ENCODE measurements at regions of chr14 and their contacts with region 1.

Region 1: GRCh38 chr14:32509632-32510187 is 180.6 kb downstream of the AKAP6 start:
- DNase-seq: peak; percentile 76 to 90
- ATAC-seq: peak; percentile 77 to 80
- H3K4me3 ChIP-seq: peak overlapping the region; percentile 7 to 39 (median 22)
- H3K27ac ChIP-seq: peak overlapping the region; percentile 78 to 94 (median 90)
- H3K4me1 ChIP-seq: peaks cover 72 to 78% of the 10 kb centered on the region in 2 donors
- H3K27me3 ChIP-seq: no peaks in the 10 kb centered on the region
- CTCF ChIP-seq: no peak
- POLR2A ChIP-seq: peak in 1 of 2 donors; percentile 61

Region 2: GRCh38 chr14:31090883-31091764 is 1418.6 kb before region 1 on chr14:
- in situ Hi-C with region 1: no loop called
- intact Hi-C with region 1: loop called (anchors 10 kb)
- DNase-seq: peak; percentile 79 to 80
- ATAC-seq: peak; percentile 94 to 97
- H3K4me3 ChIP-seq: peak overlapping the region in 1 of 4 donors; percentile 20
- H3K27ac ChIP-seq: peak overlapping the region; percentile 84 to 95 (median 92)
- H3K4me1 ChIP-seq: peaks cover 22 to 30% of the 10 kb centered on the region in 2 donors
- H3K27me3 ChIP-seq: no peaks in the 10 kb centered on the region
- CTCF ChIP-seq: no peak
- POLR2A ChIP-seq: peak; percentile 17 to 52

Region 3: DNA sequence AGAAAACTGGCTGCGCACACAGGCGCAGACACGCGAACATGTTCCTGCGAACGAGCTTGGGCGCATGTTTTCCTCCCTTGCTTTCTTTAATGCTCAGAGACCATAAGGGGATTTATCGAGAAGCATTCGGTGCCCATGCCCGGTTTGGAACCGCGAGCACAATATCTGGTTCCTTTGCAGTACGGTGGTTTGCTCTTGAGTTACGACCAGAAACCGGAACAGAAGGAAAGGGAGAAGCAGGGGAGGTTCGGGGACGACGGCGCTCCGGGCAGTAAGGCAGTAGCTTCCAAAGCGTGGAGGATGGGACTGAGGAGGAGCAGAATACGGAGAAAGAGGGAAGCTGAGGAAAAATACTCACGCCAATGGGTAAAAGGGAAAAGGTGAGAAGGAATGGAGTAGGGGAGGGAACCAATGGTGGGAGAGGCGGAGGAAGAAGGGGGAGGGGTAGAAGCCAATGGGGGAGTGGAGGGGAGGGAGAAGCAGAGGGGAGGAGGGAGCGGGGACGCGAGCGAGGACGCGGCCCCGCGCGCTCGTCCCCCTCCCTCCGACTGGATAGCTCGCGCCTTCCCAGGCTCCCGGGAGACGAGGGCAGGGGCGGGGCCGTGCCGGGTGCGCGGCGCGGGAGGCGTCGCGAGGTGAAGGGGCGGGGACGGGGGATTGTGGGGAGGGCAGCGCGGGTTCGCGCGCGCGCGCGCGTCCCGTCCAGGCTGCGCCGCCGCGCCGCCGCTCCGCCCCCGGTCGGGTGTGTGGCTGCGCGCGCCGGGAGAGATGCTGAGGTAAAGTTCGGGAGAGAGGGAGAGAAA is 433.2 kb before region 1 on chr14:
- in situ Hi-C with region 1: no loop called
- intact Hi-C with region 1: loop called (anchors 2 kb)
- DNase-seq: peak; percentile 93 to 96
- ATAC-seq: peak; percentile 87 to 89
- H3K4me3 ChIP-seq: peak overlapping the region; percentile 89 to 99 (median 96)
- H3K27ac ChIP-seq: peak overlapping the region; percentile 98 to 100 (median 100)
- H3K4me1 ChIP-seq: peaks cover 27 to 42% of the 10 kb centered on the region in 2 donors
- H3K27me3 ChIP-seq: no peaks in the 10 kb centered on the region
- CTCF ChIP-seq: no peak
- POLR2A ChIP-seq: peak; percentile 64 to 65

Region 4: DNA sequence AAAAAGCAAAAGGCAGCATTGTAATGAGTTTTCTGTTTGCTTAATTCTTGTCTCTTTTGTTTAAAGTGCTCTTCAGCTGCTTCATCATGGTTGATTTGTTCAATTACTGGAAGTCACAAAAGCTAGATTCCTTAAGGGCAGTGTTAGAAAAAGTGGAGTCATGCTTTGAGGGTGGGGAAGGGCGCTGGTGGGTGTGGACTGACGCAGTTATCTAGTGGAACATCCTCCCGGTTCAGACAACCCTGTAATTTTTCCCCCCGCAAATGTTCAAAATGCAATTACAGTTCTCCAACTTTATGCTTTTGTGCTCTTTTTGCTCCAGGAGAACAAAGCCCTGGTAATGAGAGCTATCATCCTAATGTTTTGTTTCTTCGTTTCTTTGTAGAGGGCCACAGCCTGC is 178.5 kb before region 1 on chr14:
- in situ Hi-C with region 1: loop called in 1 of 4 experiments (anchors 10 kb)
- intact Hi-C with region 1: no loop called
- DNase-seq: no peak
- ATAC-seq: no peak
- H3K4me3 ChIP-seq: no peak overlapping the region
- H3K27ac ChIP-seq: no peak overlapping the region
- H3K4me1 ChIP-seq: peaks cover 0 to 8% of the 10 kb centered on the region in 2 donors
- H3K27me3 ChIP-seq: no peaks in the 10 kb centered on the region
- CTCF ChIP-seq: no peak
- POLR2A ChIP-seq: no peak

Region 5: GRCh38 chr14:32494609-32495434 is 14.9 kb before region 1 on chr14:
- in situ Hi-C with region 1: no loop called
- intact Hi-C with region 1: loop called (anchors 1 kb)
- DNase-seq: peak; percentile 51 to 65
- ATAC-seq: peak; percentile 85
- H3K4me3 ChIP-seq: peak overlapping the region; percentile 34 to 63 (median 52)
- H3K27ac ChIP-seq: peak overlapping the region; percentile 88 to 94 (median 93)
- H3K4me1 ChIP-seq: peaks cover 68 to 70% of the 10 kb centered on the region in 2 donors
- H3K27me3 ChIP-seq: no peaks in the 10 kb centered on the region
- CTCF ChIP-seq: no peak
- POLR2A ChIP-seq: peak in 1 of 2 donors; percentile 65

Region 6: GRCh38 chr14:32606301-32606700 is 96.6 kb after region 1 on chr14:
- in situ Hi-C with region 1: no loop called
- intact Hi-C with region 1: no loop called
- DNase-seq: no peak
- ATAC-seq: no peak
- H3K4me3 ChIP-seq: no peak overlapping the region
- H3K27ac ChIP-seq: peak overlapping the region in 1 of 4 donors; percentile 54
- H3K4me1 ChIP-seq: peaks cover 25 to 49% of the 10 kb centered on the region in 2 donors
- H3K27me3 ChIP-seq: no peaks in the 10 kb centered on the region
- CTCF ChIP-seq: no peak
- POLR2A ChIP-seq: no peak

Region 7: GRCh38 chr14:34081576-34082136 is 1571.9 kb after region 1 on chr14:
- in situ Hi-C with region 1: no loop called
- intact Hi-C with region 1: loop called (anchors 10 kb)
- DNase-seq: peak in 1 of 2 donors; percentile 26
- ATAC-seq: peak; percentile 48 to 60
- H3K4me3 ChIP-seq: peak overlapping the region in 1 of 4 donors; percentile 7
- H3K27ac ChIP-seq: peak overlapping the region; percentile 83 to 95 (median 91)
- H3K4me1 ChIP-seq: peaks cover 36 to 48% of the 10 kb centered on the region in 2 donors
- H3K27me3 ChIP-seq: no peaks in the 10 kb centered on the region
- CTCF ChIP-seq: no peak
- POLR2A ChIP-seq: peak in 1 of 2 donors; percentile 3

Measured in gastrocnemius medialis (tissue), 4 donors.